ENCODE measurements at regions of chr3 and their contacts with region 1.

Region 1: DNA sequence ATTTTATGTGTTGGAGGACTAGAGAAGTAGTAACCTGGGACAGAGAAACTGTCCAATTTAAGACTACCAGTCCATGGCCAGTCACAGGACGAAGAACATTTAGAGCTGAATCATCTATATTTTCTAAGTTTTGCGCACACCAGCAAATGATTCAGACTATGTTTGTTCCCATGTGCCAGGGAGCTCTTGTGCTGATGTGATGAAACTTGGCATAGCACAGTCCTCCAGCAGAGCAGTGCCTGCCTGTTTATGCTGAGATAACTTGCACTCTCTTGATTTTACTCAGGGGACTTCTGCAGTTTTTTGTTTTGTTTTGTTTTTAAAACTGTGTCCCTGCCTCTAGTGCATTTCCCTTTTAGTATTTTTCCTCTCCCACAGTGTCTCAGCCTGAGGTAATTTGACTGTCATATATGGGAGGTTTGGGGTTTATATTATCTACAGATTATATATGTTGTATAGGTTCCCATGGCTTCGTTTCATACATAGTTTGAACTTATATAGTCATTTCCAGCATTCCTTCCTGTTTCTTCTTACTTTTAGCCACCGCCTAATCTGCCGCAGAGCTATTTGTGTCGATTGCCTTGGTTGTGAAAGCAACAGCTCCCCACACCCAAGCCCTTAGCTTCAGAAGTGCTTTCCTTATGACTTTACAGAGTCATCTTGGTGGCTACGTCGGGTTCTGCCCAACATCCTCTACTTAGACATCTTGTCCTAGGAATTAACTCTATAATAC is 45.5 kb downstream of the PPM1L start:
- DNase-seq: peak; percentile 70
- H3K4me3 Mint-ChIP-seq: peak overlapping the region; percentile 64
- H3K27ac Mint-ChIP-seq: peak overlapping the region; percentile 85
- H3K4me1 Mint-ChIP-seq: peaks cover 36% of the 10 kb centered on the region
- H3K27me3 Mint-ChIP-seq: peaks cover 12% of the 10 kb centered on the region

Region 2: GRCh38 chr3:160754855-160755747 is 46.5 kb before region 1 on chr3:
- intact Hi-C with region 1: loop called (anchors 1 kb)
- DNase-seq: peak; percentile 84
- H3K4me3 Mint-ChIP-seq: peak overlapping the region; percentile 93
- H3K27ac Mint-ChIP-seq: peak overlapping the region; percentile 98
- H3K4me1 Mint-ChIP-seq: peaks cover 37% of the 10 kb centered on the region
- H3K27me3 Mint-ChIP-seq: peaks cover 40% of the 10 kb centered on the region

Region 3: DNA sequence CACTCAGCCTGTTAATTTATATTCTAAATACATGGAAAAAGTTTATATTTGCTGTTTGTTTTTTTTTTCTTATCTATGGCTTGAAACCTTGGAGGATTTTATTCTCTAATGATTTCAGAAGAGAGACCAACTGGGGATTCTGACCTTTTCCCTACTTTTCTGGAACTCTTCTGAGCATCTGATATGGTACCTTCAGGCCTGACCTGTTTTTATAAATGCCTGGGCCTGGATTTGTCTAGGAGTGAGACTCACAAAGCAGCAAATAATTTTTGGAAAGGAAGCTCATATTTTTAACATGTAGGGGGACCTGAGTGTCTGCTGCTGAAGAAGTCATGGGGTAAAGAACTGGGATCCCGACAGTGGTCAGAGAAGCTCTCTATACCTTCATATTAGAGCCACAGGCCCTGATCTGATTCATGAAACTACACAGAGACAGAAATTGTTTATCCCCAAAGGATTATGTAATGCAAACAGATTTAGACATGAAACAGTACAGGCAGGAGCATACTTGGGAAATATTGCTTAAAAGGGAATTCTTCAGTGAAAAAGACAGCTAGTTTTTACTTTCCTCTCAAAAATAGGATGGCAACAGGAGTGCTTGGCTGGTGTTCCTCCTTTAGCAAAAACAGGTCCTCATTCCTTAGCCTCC is 29.6 kb before region 1 on chr3:
- intact Hi-C with region 1: no loop called
- DNase-seq: no peak
- H3K4me3 Mint-ChIP-seq: no peak overlapping the region
- H3K27ac Mint-ChIP-seq: no peak overlapping the region
- H3K4me1 Mint-ChIP-seq: no peaks in the 10 kb centered on the region
- H3K27me3 Mint-ChIP-seq: peaks cover 6% of the 10 kb centered on the region

Region 4: GRCh38 chr3:160842021-160843005 is 40.8 kb after region 1 on chr3:
- intact Hi-C with region 1: no loop called
- DNase-seq: no peak
- H3K4me3 Mint-ChIP-seq: no peak overlapping the region
- H3K27ac Mint-ChIP-seq: no peak overlapping the region
- H3K4me1 Mint-ChIP-seq: peaks cover 8% of the 10 kb centered on the region
- H3K27me3 Mint-ChIP-seq: peaks cover 5% of the 10 kb centered on the region

Region 5: DNA sequence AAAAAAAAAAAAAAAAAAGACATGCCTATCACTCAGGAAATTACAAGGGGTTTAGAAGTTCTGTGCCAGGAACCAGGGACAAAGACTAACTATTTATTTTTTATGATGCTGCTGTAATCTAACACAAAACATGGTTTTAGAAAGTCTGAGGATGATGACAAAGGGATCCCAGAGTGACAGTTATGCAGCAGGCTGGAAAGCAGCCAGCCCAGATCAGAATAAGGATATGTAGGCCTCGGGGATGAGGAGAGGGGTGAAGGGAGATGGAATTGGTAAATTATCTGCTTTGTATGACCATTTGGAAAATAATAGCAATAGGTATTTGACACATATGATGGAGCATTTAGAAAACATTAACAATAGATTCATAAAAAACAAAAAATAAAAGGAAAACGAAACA is 385.5 kb after region 1 on chr3:
- intact Hi-C with region 1: no loop called
- DNase-seq: no peak
- H3K4me3 Mint-ChIP-seq: no peak overlapping the region
- H3K27ac Mint-ChIP-seq: no peak overlapping the region
- H3K4me1 Mint-ChIP-seq: no peaks in the 10 kb centered on the region
- H3K27me3 Mint-ChIP-seq: peaks cover 6% of the 10 kb centered on the region

Region 6: DNA sequence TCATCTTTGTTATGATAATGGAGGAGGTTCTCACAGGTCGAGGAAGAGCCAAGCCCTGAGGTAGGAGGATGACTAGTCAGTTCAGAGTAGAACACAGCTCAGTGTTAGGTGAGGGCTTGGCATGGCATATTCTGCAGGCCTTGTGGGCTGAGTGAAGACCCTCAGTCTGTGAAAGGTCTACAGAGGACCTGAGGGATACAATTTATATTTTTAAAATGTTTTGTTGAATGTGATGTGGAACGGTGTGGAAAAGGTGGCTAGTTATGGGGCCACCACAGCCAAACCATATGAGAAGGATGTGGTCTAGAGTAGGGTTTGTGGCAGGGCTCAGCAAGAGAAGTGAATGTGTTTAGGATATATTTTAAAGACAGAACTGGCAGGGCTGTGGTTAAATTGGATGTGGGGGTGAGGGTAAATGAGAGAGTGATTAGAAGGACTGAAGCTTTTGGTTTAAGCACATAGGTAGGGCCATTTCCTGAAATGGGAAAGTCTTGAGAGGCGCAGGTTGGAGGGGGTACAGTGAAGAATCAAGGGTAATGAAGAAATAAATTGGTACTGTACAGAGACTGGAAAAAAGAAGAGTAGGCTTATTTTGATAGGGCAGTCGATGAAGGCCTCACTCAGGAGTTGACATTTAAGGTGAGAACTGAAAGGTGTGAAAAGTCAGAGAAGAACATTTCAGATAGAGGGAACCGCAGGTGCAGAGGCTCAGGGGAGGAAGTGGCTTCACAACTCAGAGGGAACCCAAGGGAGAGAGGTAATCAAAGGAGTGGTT is 509.3 kb after region 1 on chr3:
- intact Hi-C with region 1: loop called (anchors 5 kb)
- DNase-seq: peak; percentile 52
- H3K4me3 Mint-ChIP-seq: peak overlapping the region; percentile 2
- H3K27ac Mint-ChIP-seq: peak overlapping the region; percentile 56
- H3K4me1 Mint-ChIP-seq: peaks cover 22% of the 10 kb centered on the region
- H3K27me3 Mint-ChIP-seq: peaks cover 43% of the 10 kb centered on the region

Measured in activated T-helper 1 cell treated with anti-CD3 and anti-CD28 coated beads, Interleukin-12 subunit alpha, Interleukin-12 subunit beta, Interleukin-2, Interleukin-4 antibody, amounts not matched to agents 30 ng/mL and 10 ng/mL and 1 ng/mL, durations not matched to agents 14 hours and 24 hours and 36 hours (primary cell).